ENCODE measurements at regions of chrX and their contacts with region 1.

Region 1: GRCh38 chrX:120213436-120214265 is 37.0 kb upstream of the ZBTB33 start:
- DNase-seq: peak; percentile 59
- ATAC-seq: peak; percentile 83
- H3K4me3 ChIP-seq: no peak overlapping the region
- H3K27ac ChIP-seq: no peak overlapping the region
- H3K4me1 ChIP-seq: no peaks in the 10 kb centered on the region
- H3K27me3 ChIP-seq: no peaks in the 10 kb centered on the region
- CTCF ChIP-seq: peak; percentile 75
- POLR2A ChIP-seq: no peak
- RAD21 ChIP-seq: peak; percentile 60

Region 2: DNA sequence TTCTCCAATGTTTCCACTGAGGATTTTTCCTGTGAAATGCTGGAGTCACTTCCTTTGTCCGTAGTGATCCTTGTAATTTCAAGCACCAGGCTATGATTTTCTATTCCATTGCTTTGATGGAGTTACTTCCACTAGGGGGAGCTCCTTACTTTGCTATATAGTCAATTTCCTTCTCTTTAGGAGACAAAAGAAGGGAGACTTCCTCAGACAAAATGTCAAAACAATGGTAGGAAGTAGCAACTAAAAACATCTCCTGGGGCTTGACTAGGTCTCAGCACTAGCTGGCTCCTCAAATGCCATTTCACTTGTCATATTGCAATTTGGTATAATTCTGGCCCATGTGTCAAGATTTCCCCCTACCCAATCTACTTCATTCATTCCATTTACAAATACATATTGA is 1366.0 kb before region 1 on chrX:
- CTCF ChIA-PET with region 1: no interaction called
- POLR2A ChIA-PET with region 1: no interaction called
- dilution Hi-C with region 1: no loop called
- in situ Hi-C with region 1: no loop called
- intact Hi-C with region 1: loop called (anchors 10 kb)
- DNase-seq: peak; percentile 42
- ATAC-seq: peak; percentile 75; the same call in 1 of the 2 replicates
- H3K4me3 ChIP-seq: no peak overlapping the region
- H3K27ac ChIP-seq: no peak overlapping the region
- H3K4me1 ChIP-seq: no peaks in the 10 kb centered on the region
- H3K27me3 ChIP-seq: peaks cover 7% of the 10 kb centered on the region
- CTCF ChIP-seq: peak; percentile 69
- POLR2A ChIP-seq: no peak
- RAD21 ChIP-seq: peak; percentile 58

Region 3: DNA sequence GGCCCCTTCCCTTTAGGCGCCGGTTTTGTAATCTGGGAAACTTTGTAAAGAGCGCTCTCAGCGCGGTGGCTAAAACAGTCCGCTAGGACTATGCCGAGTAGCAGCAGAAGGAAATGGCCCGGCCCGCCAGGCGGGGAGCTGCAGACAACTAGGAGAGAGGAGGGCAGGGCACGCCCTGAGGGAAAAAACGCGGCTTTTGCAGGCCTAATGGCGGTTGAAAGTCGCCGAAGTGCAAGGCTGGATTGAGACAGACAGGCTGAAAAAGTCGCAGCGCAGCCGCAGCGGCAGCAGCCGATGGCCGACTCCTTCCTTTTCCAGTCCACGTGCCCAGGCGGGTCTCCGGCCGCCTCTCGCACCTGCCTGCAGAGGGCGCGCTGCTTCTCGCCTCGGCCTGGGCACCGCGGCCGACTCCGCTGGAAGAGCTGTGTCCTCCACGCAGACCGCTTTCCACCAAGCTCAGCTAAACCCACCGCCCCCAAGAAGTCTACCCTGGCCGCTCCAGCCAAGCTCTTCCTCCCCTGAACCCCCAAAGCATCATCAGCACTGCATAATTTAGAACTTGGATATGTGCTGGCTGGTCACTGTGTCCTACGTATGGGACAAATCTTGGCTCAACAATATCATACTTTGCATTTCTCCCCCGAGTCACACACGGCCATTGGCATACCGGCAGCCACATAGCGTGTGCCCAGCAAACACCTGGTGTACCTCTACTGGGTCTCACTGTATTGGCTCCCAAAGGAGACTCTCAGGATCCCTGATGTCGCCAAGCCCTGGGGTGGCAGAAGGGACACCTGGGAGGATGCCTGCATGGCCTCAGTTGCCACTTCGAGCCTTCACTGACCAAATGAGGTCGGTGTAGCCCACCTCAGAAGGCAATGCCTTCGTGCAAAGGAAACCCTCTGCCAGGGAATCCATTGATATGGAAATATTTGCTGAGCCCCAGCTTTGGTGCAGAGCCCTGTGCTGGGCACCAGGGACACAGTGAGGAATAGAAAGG is 730.9 kb before region 1 on chrX:
- CTCF ChIA-PET with region 1: no interaction called
- POLR2A ChIA-PET with region 1: no interaction called
- dilution Hi-C with region 1: no loop called
- in situ Hi-C with region 1: no loop called
- intact Hi-C with region 1: loop called (anchors 10 kb)
- DNase-seq: peak; percentile 39
- ATAC-seq: peak; percentile 76
- H3K4me3 ChIP-seq: peak overlapping the region; percentile 52
- H3K27ac ChIP-seq: peak overlapping the region; percentile 20; the same call in 1 of the 2 replicates
- H3K4me1 ChIP-seq: peaks cover 4% of the 10 kb centered on the region; the same call in 1 of the 2 replicates
- H3K27me3 ChIP-seq: no peaks in the 10 kb centered on the region
- CTCF ChIP-seq: peak; percentile 58
- POLR2A ChIP-seq: no peak
- RAD21 ChIP-seq: no peak

Region 4: GRCh38 chrX:119981286-119982070 is 232.2 kb before region 1 on chrX:
- CTCF ChIA-PET with region 1: no interaction called
- POLR2A ChIA-PET with region 1: no interaction called
- dilution Hi-C with region 1: no loop called
- in situ Hi-C with region 1: no loop called
- intact Hi-C with region 1: loop called (anchors 1 kb)
- DNase-seq: peak; percentile 5
- ATAC-seq: no peak
- H3K4me3 ChIP-seq: no peak overlapping the region
- H3K27ac ChIP-seq: no peak overlapping the region
- H3K4me1 ChIP-seq: no peaks in the 10 kb centered on the region
- H3K27me3 ChIP-seq: 0 out of 2 replicates have a peak, but pooled peaks cover 2% of the 10 kb centered on the region
- CTCF ChIP-seq: peak; percentile 44
- POLR2A ChIP-seq: no peak
- RAD21 ChIP-seq: 0 out of 2 replicates have a peak, but pooled peaks have one; percentile 25

Region 5: GRCh38 chrX:120036704-120037103 is 176.9 kb before region 1 on chrX:
- CTCF ChIA-PET with region 1: no interaction called
- POLR2A ChIA-PET with region 1: no interaction called
- dilution Hi-C with region 1: no loop called
- in situ Hi-C with region 1: no loop called
- intact Hi-C with region 1: loop called (anchors 10 kb)
- DNase-seq: no peak
- ATAC-seq: no peak
- H3K4me3 ChIP-seq: no peak overlapping the region
- H3K27ac ChIP-seq: no peak overlapping the region
- H3K4me1 ChIP-seq: no peaks in the 10 kb centered on the region
- H3K27me3 ChIP-seq: no peaks in the 10 kb centered on the region
- CTCF ChIP-seq: no peak
- POLR2A ChIP-seq: no peak
- RAD21 ChIP-seq: no peak

Measured in IMR-90 (cell line).